Common myeloid progenitor, CD34-positive (primary cell): ENCODE measurements at regions of chr1 and their contacts with region 1.

Region 1: GRCh38 chr1:210342986-210343780 is 14.5 kb downstream of the HHAT start:
- DNase-seq: peak; percentile 20 to 46 (median 37)
- H3K4me3 ChIP-seq: peak overlapping the region in 3 of 7 experiments; percentile 24 to 69 (median 55)
- H3K27ac ChIP-seq: no peak overlapping the region
- H3K4me1 ChIP-seq: peaks cover 10 to 36% (median 16%) of the 10 kb centered on the region in 4 experiments
- H3K27me3 ChIP-seq: no peaks in the 10 kb centered on the region

Region 2: DNA sequence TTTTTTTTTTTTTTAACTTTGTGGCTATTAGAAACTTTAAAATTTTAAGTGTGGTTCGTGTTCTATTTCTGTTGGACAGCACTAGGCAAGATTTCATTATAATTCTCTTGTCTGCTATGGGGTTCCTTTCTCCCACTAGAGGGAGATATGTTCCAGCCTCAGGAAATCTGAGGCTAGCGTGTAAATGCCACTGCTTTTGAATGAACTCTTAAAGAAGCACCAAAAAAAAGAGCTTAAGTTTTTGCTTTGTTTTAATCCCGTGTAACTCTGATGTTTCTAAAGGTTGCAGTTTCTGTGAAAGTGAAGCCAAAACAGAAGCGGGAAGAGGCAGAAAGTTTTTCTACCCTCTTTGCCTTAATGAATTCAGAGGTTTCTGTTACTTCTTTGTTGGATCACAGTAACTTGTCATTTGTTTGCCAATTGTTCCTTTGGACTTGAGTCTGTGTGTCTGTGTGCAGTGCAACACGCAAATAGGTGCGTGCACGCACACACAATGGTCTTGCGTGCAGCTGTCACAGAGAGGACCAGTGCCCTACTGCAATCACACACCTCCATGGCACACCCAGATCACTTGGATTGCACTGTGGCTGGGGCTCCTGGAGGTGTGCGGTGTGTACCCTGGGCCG is 17.8 kb after region 1 on chr1:
- CTCF ChIA-PET with region 1: interaction called, 13 read pairs
- POLR2A ChIA-PET with region 1: no interaction called
- DNase-seq: peak; percentile 27 to 69 (median 60)
- H3K4me3 ChIP-seq: no peak overlapping the region
- H3K27ac ChIP-seq: no peak overlapping the region
- H3K4me1 ChIP-seq: no peaks in the 10 kb centered on the region
- H3K27me3 ChIP-seq: no peaks in the 10 kb centered on the region